OCI-LY7 (cell line): ENCODE measurements at regions of chr1 and their contacts with region 1.

Region 1: DNA sequence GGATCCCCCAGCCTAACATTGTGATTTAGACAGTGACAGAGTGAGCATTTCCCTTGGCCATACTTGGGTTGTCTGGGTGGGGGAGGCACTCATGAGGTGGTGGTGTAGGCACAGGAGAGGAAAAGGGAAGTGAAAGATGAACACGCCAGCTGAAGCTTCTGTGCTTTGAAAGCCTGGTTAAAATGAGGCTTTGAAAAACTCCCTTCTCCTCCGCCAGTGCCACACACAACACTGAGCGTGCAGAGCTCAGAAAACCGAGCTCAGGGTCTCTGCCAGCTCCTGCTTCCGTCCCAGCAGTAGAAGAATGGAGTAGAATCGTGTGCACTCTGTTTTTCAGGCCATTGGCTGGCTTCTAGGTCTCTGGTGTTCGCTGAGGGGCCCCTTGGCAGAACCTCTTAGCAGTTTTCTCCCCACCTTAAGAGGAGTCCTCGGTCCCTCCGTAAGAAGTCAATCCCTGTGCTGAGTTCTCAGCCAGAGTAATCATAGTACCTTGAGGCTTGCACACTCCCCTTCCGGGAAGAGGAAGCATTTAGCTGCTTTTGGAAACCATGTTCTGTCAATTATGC is 12.9 kb downstream of the PLEKHM2 start:
- DNase-seq: peak; percentile 93
- H3K4me3 ChIP-seq: peak overlapping the region; percentile 63
- H3K27ac ChIP-seq: peak overlapping the region; percentile 93
- H3K4me1 ChIP-seq: peaks cover 36% of the 10 kb centered on the region
- CTCF ChIP-seq: no peak

Region 2: DNA sequence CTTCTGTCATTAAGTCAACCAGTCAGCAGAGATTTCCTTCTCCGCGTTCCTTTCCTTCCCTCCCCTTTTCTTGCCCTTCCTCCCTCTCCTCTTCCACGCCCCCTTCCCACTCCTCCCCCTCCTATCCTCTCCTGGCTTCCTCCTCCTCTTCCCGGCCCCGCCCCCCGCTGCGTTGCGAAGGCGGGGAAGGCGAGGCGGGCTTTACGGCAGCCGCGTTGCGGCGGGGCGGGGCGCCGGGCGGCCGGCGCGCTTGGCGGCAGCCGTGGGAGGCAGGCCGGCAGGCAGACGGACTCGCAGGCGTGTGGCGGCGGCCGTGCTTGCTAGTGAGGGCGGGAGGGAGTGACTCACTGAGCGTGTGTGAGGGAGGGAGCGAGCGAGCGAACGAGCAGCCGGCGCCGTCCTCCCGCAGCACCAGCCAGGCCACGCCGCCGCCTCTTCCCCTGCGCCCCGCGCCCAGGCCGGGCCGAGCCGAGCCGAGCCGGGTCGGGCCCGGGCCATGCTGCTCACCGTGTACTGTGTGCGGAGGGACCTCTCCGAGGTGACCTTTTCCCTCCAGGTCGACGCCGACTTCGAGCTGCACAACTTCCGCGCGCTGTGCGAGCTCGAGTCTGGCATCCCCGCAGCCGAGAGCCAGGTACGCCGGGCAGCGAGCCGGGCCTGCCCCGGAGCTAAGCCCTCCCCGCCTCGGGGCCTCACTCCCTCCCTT is 79.7 kb before region 1 on chr1 and contains the start of gene DDI2:
- CTCF ChIA-PET with region 1: interaction called, 3 read pairs
- POLR2A ChIA-PET with region 1: interaction called, 10 read pairs
- intact Hi-C with region 1: loop called (anchors 2 kb)
- DNase-seq: peak; percentile 92
- H3K4me3 ChIP-seq: peak within 1 kb of the TSS; percentile 99
- H3K27ac ChIP-seq: peak within 1 kb of the TSS; percentile 71
- H3K4me1 ChIP-seq: peaks cover 28% of the 10 kb centered on the region
- CTCF ChIP-seq: no peak
- total RNA-seq, gene DDI2: 23.5 and 29.6 TPM in 2 replicates

Region 3: DNA sequence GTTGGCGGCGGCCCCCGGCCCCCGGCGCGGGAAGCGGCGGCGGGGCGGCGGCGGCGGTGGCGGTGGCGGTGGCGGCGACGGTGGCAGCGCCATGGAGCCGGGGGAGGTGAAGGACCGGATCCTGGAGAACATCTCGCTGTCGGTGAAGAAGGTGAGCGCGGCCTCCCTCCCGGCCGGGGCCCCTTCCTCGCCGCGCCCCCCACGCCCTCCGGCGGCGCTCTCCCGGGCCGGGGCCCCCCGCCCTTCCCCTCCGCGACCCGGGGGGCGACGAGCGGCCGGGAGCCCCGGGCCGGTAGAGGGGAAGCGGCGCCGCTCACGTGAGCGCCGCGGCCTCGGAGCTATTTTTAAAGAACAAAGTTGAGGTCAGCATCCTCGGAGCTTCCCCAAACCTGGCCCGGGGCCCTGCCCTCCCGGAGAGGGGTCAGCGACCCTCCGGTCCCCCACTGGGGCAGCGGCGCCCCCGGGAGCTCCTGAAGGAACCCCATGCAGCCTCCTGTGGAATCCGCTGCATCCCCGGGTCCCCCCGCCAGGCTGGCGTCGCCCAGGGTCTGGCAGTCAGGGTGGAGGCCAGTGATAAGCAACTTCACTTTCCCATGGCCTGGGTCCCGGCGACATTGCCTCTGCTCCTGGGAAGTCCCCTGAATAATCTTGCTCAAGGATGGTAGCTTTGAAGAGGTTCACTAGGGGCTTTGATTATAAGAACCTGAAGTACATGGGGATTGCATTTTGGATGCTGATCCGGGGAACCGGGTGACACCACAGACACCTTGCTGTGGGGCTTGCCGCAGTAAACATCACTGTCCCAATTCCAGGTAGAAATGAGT is 12.4 kb before region 1 on chr1:
- CTCF ChIA-PET with region 1: no interaction called
- POLR2A ChIA-PET with region 1: interaction called, 13 read pairs
- intact Hi-C with region 1: no loop called
- DNase-seq: peak; percentile 43
- H3K4me3 ChIP-seq: peak overlapping the region; percentile 83
- H3K27ac ChIP-seq: peak overlapping the region; percentile 20
- H3K4me1 ChIP-seq: peaks cover 13% of the 10 kb centered on the region
- CTCF ChIP-seq: no peak